Activated CD4-positive, alpha-beta memory T cell treated with anti-CD3 and anti-CD28 coated beads for 36 hours (primary cell): ENCODE measurements at regions of chr16 and their contacts with region 1.

Region 1: GRCh38 chr16:17343028-17343427 is 127.7 kb downstream of the XYLT1 start:
- DNase-seq: peak; percentile 49
- H3K4me3 Mint-ChIP-seq: no peak overlapping the region
- H3K27ac Mint-ChIP-seq: no peak overlapping the region
- H3K4me1 Mint-ChIP-seq: peaks cover 65% of the 10 kb centered on the region
- H3K27me3 Mint-ChIP-seq: no peaks in the 10 kb centered on the region

Region 2: GRCh38 chr16:17277977-17278381 is 65.0 kb before region 1 on chr16:
- CTCF ChIA-PET with region 1: no interaction called
- POLR2A ChIA-PET with region 1: no interaction called
- intact Hi-C with region 1: loop called (anchors 5 kb)
- DNase-seq: no peak
- H3K4me3 Mint-ChIP-seq: no peak overlapping the region
- H3K27ac Mint-ChIP-seq: no peak overlapping the region
- H3K4me1 Mint-ChIP-seq: peaks cover 33% of the 10 kb centered on the region
- H3K27me3 Mint-ChIP-seq: no peaks in the 10 kb centered on the region

Region 3: GRCh38 chr16:17364319-17365210 is 21.5 kb after region 1 on chr16:
- CTCF ChIA-PET with region 1: interaction called, 13 read pairs
- POLR2A ChIA-PET with region 1: interaction called, 6 read pairs
- intact Hi-C with region 1: no loop called
- DNase-seq: peak; percentile 72
- H3K4me3 Mint-ChIP-seq: peak overlapping the region; percentile 48
- H3K27ac Mint-ChIP-seq: peak overlapping the region; percentile 83
- H3K4me1 Mint-ChIP-seq: peaks cover 95% of the 10 kb centered on the region
- H3K27me3 Mint-ChIP-seq: no peaks in the 10 kb centered on the region

Region 4: GRCh38 chr16:17812771-17813170 is 469.7 kb after region 1 on chr16:
- CTCF ChIA-PET with region 1: no interaction called
- POLR2A ChIA-PET with region 1: no interaction called
- intact Hi-C with region 1: no loop called
- DNase-seq: no peak
- H3K4me3 Mint-ChIP-seq: no peak overlapping the region
- H3K27ac Mint-ChIP-seq: no peak overlapping the region
- H3K4me1 Mint-ChIP-seq: no peaks in the 10 kb centered on the region
- H3K27me3 Mint-ChIP-seq: peaks cover 8% of the 10 kb centered on the region